ENCODE measurements at regions of chr1 and their contacts with region 1.

Region 1: DNA sequence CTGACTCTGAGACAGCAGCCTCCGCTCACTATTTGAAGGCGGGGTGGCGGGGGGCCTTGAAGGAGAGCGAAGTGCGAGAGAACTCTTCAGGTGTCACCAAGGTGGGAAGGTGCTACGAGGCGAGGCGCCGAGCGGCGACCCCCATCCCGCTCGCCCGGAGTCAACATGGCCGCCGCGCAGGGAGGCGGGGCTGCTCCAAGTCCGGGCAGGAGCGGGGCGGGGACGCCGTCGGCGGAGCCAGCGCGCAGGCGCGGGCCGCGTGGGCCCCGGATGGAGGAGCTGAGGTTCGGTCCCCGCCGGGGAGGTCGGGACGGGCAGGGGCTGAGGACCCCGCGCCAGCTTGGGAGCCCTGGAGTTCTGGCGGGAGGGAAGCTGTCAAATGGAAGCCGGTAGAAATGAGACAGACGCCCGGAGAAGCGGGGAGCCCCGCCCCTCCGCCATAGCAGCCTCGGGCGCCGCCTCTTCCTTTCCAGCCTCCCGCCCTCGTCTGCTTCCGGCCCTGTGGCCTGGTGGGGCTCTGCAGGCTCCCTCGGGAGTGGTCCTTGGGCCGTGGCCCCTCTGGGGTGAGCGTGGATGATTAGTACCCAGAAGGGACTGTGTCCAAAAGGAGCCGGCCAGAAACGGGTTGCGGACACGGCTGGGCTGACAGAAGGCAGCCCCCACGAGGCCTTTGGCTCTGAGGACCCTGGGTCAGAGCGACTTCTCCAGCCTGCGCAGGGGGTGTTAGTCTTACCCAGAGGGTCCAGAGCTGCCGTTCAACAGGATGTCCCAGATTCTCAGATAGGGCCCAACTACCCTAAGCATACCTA is at the start of gene PIGV:
- DNase-seq: peak; percentile 90
- H3K4me3 ChIP-seq: peak within 1 kb of the TSS; percentile 73 to 90 (median 78)
- H3K27ac ChIP-seq: peak within 1 kb of the TSS; percentile 98 to 99 (median 98)
- H3K4me1 ChIP-seq: peaks cover 20 to 58% (median 50%) of the 10 kb centered on the region in 4 donors
- H3K27me3 ChIP-seq: no peaks in the 10 kb centered on the region
- CTCF ChIP-seq: peak in 3 of 5 experiments; percentile 6 to 58 (median 51)
- EP300 ChIP-seq: no peak
- POLR2A ChIP-seq: peak; percentile 81
- total RNA-seq, gene PIGV: 16.1 to 32.2 (median 24.2) TPM

Region 2: GRCh38 chr1:26677306-26678115 is 110.4 kb before region 1 on chr1:
- in situ Hi-C with region 1: loop called in 2 of 4 experiments (anchors 25 kb)
- intact Hi-C with region 1: loop called (anchors 5 kb)
- DNase-seq: peak; percentile 92
- H3K4me3 ChIP-seq: peak overlapping the region in 1 of 4 donors; percentile 17
- H3K27ac ChIP-seq: peak overlapping the region in 3 of 4 donors; percentile 10 to 38 (median 30)
- H3K4me1 ChIP-seq: peaks cover 0 to 13% (median 11%) of the 10 kb centered on the region in 4 donors
- H3K27me3 ChIP-seq: no peaks in the 10 kb centered on the region
- CTCF ChIP-seq: peak; percentile 61 to 94 (median 62)
- EP300 ChIP-seq: no peak
- POLR2A ChIP-seq: no peak

Region 3: GRCh38 chr1:26695356-26696118 is 92.4 kb before region 1 on chr1 and contains the start of gene ARID1A:
- in situ Hi-C with region 1: loop called (anchors 10 to 25 kb)
- intact Hi-C with region 1: loop called (anchors 5 kb)
- DNase-seq: peak; percentile 97
- H3K4me3 ChIP-seq: peak within 1 kb of the TSS; percentile 90 to 99 (median 93)
- H3K27ac ChIP-seq: peak within 1 kb of the TSS; percentile 98 to 100 (median 100)
- H3K4me1 ChIP-seq: peaks cover 35 to 60% (median 54%) of the 10 kb centered on the region in 4 donors
- H3K27me3 ChIP-seq: no peaks in the 10 kb centered on the region
- CTCF ChIP-seq: peak in 2 of 5 experiments; percentile 15 to 21
- EP300 ChIP-seq: no peak
- POLR2A ChIP-seq: peak; percentile 77
- total RNA-seq, gene ARID1A: 43.4 to 72.0 (median 53.1) TPM

Region 4: GRCh38 chr1:26744075-26744959 is 43.6 kb before region 1 on chr1:
- in situ Hi-C with region 1: no loop called
- intact Hi-C with region 1: loop called (anchors 1 kb)
- DNase-seq: peak; percentile 81
- H3K4me3 ChIP-seq: no peak overlapping the region
- H3K27ac ChIP-seq: peak overlapping the region; percentile 71 to 74 (median 72)
- H3K4me1 ChIP-seq: peaks cover 16 to 67% (median 31%) of the 10 kb centered on the region in 4 donors
- H3K27me3 ChIP-seq: no peaks in the 10 kb centered on the region
- CTCF ChIP-seq: no peak
- EP300 ChIP-seq: no peak
- POLR2A ChIP-seq: no peak